PC-9 (cell line): ENCODE measurements at regions of chr16 and their contacts with region 1.

Region 1: GRCh38 chr16:89779231-89779908 is 37.1 kb downstream of the FANCA start:
- DNase-seq: no peak
- H3K4me3 ChIP-seq: no peak overlapping the region
- H3K27ac ChIP-seq: no peak overlapping the region
- H3K4me1 ChIP-seq: no peaks in the 10 kb centered on the region
- H3K27me3 ChIP-seq: no peaks in the 10 kb centered on the region
- CTCF ChIP-seq: no peak

Region 2: GRCh38 chr16:89741342-89742014 is 37.9 kb before region 1 on chr16:
- CTCF ChIA-PET with region 1: no interaction called
- POLR2A ChIA-PET with region 1: interaction called, 30 read pairs
- intact Hi-C with region 1: no loop called
- DNase-seq: no peak
- H3K4me3 ChIP-seq: no peak overlapping the region
- H3K27ac ChIP-seq: no peak overlapping the region
- H3K4me1 ChIP-seq: no peaks in the 10 kb centered on the region
- H3K27me3 ChIP-seq: no peaks in the 10 kb centered on the region
- CTCF ChIP-seq: no peak

Region 3: DNA sequence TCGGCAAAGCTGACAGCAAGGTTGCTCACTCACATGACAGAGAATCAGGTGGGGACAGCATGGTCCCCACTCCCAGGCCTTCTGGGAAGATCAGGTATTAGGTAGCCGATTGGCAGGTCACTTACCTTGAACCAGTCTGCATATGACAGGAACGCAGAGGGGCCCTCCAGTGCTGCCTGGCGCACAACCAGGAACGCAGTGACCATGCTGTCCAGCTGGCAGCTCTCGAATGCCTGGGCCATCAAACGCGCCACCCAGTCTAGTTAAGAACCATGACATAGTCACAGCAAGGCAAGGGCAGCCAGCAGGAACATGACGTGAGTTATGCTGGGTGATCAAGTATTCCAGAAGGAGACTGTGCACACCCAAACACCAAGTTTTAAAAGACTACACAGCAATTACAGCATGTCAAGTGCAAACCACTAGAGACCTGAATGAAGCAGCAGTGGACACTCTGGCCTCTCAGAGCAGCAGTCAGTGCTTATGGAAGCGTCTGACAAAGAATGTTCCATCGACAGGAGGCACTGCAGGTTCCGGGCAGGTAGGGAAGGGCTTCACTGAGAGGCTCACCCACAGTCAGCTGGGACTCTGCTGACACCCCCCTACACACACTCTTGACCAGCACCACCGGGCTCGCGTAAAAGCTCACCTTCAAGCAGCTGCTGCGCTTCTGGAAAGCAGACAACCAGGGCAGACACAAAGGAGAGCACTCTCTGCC is 12.1 kb after region 1 on chr16:
- CTCF ChIA-PET with region 1: no interaction called
- POLR2A ChIA-PET with region 1: no interaction called
- intact Hi-C with region 1: no loop called
- DNase-seq: no peak
- H3K4me3 ChIP-seq: no peak overlapping the region
- H3K27ac ChIP-seq: no peak overlapping the region
- H3K4me1 ChIP-seq: no peaks in the 10 kb centered on the region
- H3K27me3 ChIP-seq: no peaks in the 10 kb centered on the region
- CTCF ChIP-seq: no peak

Region 4: GRCh38 chr16:89801800-89802199 is 22.4 kb after region 1 on chr16:
- CTCF ChIA-PET with region 1: no interaction called
- POLR2A ChIA-PET with region 1: no interaction called
- intact Hi-C with region 1: no loop called
- DNase-seq: no peak
- H3K4me3 ChIP-seq: no peak overlapping the region
- H3K27ac ChIP-seq: no peak overlapping the region
- H3K4me1 ChIP-seq: no peaks in the 10 kb centered on the region
- H3K27me3 ChIP-seq: no peaks in the 10 kb centered on the region
- CTCF ChIP-seq: no peak